Panc1 (cell line): ENCODE measurements at regions of chr2 and their contacts with region 1.

Region 1: GRCh38 chr2:172597176-172597842 is 41.4 kb downstream of the PDK1 start:
- DNase-seq: no peak
- ATAC-seq: no peak
- H3K4me3 ChIP-seq: no peak overlapping the region
- H3K27ac ChIP-seq: no peak overlapping the region
- H3K4me1 ChIP-seq: no peaks in the 10 kb centered on the region
- H3K27me3 ChIP-seq: no peaks in the 10 kb centered on the region
- CTCF ChIP-seq: no peak

Region 2: DNA sequence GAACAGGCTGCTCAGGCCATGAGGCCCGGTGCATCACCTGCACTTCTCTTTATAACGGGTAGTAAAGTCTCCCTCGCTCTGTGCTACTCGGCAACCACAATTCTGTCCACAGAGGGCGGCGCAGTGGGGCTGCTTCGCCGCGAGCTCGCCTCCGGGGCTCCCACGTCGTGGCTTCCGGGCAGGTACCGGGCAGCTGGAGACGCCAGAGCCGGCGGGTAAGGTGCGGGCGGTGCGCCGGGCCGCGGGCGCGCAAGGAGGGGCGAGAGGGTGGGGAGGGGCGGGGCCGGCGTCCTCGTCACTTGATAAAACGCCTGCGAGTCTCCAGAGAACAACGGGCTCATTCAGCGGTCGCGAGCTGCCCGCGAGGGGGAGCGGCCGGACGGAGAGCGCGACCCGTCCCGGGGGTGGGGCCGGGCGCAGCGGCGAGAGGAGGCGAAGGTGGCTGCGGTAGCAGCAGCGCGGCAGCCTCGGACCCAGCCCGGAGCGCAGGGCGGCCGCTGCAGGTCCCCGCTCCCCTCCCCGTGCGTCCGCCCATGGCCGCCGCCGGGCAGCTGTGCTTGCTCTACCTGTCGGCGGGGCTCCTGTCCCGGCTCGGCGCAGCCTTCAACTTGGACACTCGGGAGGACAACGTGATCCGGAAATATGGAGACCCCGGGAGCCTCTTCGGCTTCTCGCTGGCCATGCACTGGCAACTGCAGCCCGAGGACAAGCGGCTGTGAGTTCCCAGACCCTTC is 169.9 kb before region 1 on chr2 and contains the start of gene ITGA6:
- CTCF ChIA-PET with region 1: interaction called, 10 read pairs
- POLR2A ChIA-PET with region 1: no interaction called
- in situ Hi-C with region 1: no loop called
- intact Hi-C with region 1: no loop called
- DNase-seq: no peak
- ATAC-seq: peak; percentile 93
- H3K4me3 ChIP-seq: peak within 1 kb of the TSS; percentile 79 to 84
- H3K27ac ChIP-seq: peak within 1 kb of the TSS; percentile 74
- H3K4me1 ChIP-seq: peaks cover 22% of the 10 kb centered on the region
- H3K27me3 ChIP-seq: no peaks in the 10 kb centered on the region
- CTCF ChIP-seq: peak; percentile 17
- total RNA-seq, gene ITGA6: 75.9 TPM